ENCODE measurements at regions of chr10 and their contacts with region 1.

Region 1: DNA sequence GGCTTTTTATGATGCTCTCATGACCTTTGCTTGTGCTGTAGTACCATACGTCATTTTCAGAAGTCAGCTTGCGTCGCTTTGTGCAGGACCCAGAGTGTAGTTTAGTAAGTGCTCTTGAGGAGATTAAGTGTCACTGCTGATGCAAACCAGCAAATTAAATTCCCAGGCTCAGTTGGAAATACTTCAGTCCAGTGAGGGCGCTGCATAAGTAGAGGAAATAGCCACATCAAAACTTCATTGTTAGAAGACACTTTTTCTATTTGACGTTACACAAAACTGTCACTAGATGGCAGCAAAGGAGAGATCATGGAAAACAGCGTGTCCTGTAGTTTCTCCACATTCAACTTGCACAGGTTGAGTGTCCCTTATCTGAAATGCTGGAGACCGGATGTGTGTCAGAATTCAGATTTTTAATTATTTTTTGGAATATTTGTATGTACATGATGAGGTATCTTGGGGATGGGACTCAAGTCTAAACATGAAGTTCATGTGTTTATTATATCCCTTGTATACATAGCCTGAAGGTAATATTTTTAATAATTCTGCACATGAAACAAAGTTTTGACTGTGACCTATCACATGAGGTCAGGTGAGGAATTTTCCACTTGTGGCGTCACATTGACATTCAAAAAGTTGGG is 7.9 kb downstream of the ZNF22 start:
- DNase-seq: peak; percentile 20
- ATAC-seq: peak; percentile 79
- H3K4me3 Mint-ChIP-seq: no peak overlapping the region
- H3K27ac Mint-ChIP-seq: no peak overlapping the region
- H3K4me1 Mint-ChIP-seq: no peaks in the 10 kb centered on the region
- H3K27me3 Mint-ChIP-seq: no peaks in the 10 kb centered on the region

Region 2: GRCh38 chr10:45235798-45236231 is 227.2 kb after region 1 on chr10:
- CTCF ChIA-PET with region 1: interaction called, 3 read pairs
- POLR2A ChIA-PET with region 1: no interaction called
- intact Hi-C with region 1: loop called (anchors 2 to 10 kb)
- DNase-seq: no peak
- ATAC-seq: no peak
- H3K4me3 Mint-ChIP-seq: no peak overlapping the region
- H3K27ac Mint-ChIP-seq: no peak overlapping the region
- H3K4me1 Mint-ChIP-seq: peaks cover 7% of the 10 kb centered on the region
- H3K27me3 Mint-ChIP-seq: peaks cover 5% of the 10 kb centered on the region

Region 3: GRCh38 chr10:45249978-45250693 is 241.5 kb after region 1 on chr10:
- CTCF ChIA-PET with region 1: no interaction called
- POLR2A ChIA-PET with region 1: no interaction called
- intact Hi-C with region 1: loop called in 1 of 2 experiments (anchors 1 kb)
- DNase-seq: no peak
- ATAC-seq: peak; percentile 26
- H3K4me3 Mint-ChIP-seq: peak overlapping the region; percentile 22
- H3K27ac Mint-ChIP-seq: no peak overlapping the region
- H3K4me1 Mint-ChIP-seq: peaks cover 2% of the 10 kb centered on the region
- H3K27me3 Mint-ChIP-seq: peaks cover 3% of the 10 kb centered on the region

Region 4: DNA sequence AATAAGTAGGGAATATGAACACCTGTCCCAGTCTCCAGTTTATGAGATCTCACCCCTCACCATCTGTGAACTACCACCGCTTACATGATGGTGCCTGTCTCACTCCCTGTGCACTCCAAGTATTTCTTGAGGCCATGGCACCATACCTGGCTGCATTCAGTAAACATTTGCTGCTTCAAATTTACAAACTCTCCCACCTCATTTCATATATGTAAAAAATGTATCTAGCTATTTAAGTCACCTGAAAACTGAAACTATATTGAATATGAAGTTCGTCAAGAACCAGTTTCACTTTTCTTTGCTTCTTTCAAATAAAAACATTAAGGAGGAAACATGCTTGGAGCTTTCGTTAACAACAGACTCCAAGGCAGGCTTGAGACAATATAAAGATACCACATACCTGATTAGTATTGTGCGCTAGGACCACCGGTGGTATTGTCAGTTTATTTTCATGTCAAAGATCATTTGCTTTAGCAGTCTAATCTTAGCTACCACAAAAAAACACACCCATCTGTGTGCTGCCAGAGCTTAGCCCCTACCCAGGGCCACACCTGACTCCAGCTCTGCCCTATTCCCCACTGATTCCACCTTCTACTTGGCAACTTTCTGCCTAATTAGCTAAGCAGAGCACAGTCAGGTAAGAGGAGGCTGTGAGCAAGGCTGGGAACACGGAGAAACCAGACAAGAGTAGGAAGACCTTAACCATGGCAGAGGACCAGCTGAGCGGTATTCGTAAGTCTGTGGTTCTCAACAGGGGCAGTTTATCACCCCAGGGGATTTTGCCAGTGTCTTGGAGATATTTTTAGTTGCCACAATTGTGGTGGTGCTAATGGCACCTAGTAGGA is 572.0 kb after region 1 on chr10:
- CTCF ChIA-PET with region 1: no interaction called
- POLR2A ChIA-PET with region 1: no interaction called
- intact Hi-C with region 1: loop called in 1 of 2 experiments (anchors 10 kb)
- DNase-seq: peak; percentile 41
- ATAC-seq: peak; percentile 68
- H3K4me3 Mint-ChIP-seq: peak overlapping the region; percentile 76
- H3K27ac Mint-ChIP-seq: peak overlapping the region; percentile 95
- H3K4me1 Mint-ChIP-seq: peaks cover 37% of the 10 kb centered on the region
- H3K27me3 Mint-ChIP-seq: no peaks in the 10 kb centered on the region

Region 5: GRCh38 chr10:45997994-45998763 is 989.5 kb after region 1 on chr10:
- CTCF ChIA-PET with region 1: no interaction called
- POLR2A ChIA-PET with region 1: no interaction called
- intact Hi-C with region 1: loop called in 1 of 2 experiments (anchors 10 kb)
- DNase-seq: no peak
- ATAC-seq: no peak
- H3K4me3 Mint-ChIP-seq: no peak overlapping the region
- H3K27ac Mint-ChIP-seq: no peak overlapping the region
- H3K4me1 Mint-ChIP-seq: no peaks in the 10 kb centered on the region
- H3K27me3 Mint-ChIP-seq: no peaks in the 10 kb centered on the region